IMR-90 (cell line): ENCODE measurements at regions of chr12 and their contacts with region 1.

Region 1: GRCh38 chr12:131104463-131105350 is 151.0 kb downstream of the ADGRD1 start:
- DNase-seq: peak; percentile 16
- ATAC-seq: peak; percentile 96
- H3K4me3 ChIP-seq: no peak overlapping the region
- H3K27ac ChIP-seq: no peak overlapping the region
- H3K4me1 ChIP-seq: no peaks in the 10 kb centered on the region
- H3K27me3 ChIP-seq: no peaks in the 10 kb centered on the region
- CTCF ChIP-seq: peak; percentile 36
- POLR2A ChIP-seq: no peak
- RAD21 ChIP-seq: peak; percentile 33

Region 2: DNA sequence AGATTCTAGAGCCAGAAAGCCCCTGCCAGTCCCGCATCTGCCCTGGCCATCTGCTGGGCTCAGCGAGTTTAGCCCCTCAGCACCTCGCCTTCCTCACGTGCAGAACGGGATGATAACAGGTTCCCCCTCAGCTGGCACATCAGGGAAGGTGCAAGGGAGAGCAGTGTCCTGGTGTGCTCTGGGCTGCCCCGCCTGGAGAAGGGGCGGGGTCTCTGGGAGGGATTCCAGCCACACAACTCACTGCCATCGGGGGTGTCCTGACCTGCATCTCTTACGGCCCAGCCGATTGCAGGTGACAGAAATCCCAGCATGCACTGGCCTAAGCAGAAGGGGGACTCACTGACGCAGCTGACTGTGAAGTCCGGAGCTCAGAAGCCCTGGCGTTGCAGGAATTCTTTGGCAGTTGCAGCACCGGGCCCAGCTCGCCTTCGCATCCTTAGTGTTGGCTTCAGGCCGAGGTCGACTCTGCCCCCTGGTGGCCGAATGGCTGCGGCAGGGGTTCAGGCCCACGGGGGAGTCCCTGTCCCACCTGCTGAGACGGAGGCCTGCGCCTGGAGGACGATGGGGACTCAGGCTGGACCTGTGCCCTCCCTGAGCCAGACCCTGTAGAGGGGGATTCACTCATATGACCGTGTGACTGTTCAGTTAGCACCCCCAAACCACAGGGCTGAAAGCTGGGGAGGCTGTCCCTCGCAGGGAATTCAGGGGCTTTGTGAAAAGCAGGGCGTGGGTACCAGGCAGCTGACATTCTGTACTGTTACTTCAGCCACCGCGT is 27.6 kb after region 1 on chr12:
- CTCF ChIA-PET with region 1: no interaction called
- POLR2A ChIA-PET with region 1: no interaction called
- dilution Hi-C with region 1: no loop called
- in situ Hi-C with region 1: no loop called
- intact Hi-C with region 1: loop called (anchors 1 kb)
- DNase-seq: peak; percentile 1
- ATAC-seq: peak; percentile 75
- H3K4me3 ChIP-seq: no peak overlapping the region
- H3K27ac ChIP-seq: no peak overlapping the region
- H3K4me1 ChIP-seq: no peaks in the 10 kb centered on the region
- H3K27me3 ChIP-seq: no peaks in the 10 kb centered on the region
- CTCF ChIP-seq: no peak
- POLR2A ChIP-seq: no peak
- RAD21 ChIP-seq: no peak

Region 3: DNA sequence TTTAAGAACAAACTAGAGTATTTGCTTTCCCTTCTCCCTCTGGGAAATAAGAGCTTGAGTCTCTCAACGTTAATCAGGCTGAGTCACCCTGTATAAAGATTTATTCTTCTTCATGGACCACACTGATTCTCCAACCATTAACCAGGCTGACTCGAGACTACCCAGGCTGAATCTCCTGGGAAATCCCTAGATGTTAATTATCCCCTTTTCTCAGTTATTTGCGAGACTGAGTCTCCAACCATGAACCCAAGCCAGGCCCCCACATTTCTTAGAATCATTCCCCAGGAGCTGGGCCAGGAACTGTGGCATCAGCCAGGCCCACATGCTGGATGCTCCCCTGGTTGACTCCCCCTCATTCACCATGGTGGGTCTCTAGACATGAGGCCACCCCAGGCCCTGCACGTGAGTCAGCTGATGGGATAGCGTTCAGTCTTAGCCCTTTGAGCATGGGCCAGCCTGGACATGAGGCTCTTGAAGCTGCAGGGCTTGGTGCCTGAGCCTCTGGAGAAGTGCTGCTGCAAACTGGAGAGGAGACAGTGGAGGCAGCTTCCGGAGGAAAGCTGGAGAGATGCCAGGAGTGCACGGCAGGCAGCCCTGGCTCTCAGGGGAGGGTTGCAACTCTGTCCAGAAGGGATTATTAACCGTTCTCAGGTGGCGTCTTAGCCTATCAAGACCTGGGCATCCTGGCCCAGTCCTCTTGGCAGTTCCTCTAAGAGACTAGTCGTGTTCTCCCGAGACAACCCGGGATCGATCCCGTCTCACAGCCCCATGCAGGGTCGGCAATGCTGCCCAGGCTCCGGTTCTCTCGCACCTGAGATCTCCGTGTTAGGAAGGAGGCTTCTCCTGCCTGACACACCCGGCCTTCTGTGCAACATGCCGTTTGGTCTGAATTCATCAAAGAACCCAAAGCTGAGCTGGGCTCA is 145.6 kb after region 1 on chr12:
- CTCF ChIA-PET with region 1: no interaction called
- POLR2A ChIA-PET with region 1: no interaction called
- dilution Hi-C with region 1: no loop called
- in situ Hi-C with region 1: no loop called
- intact Hi-C with region 1: no loop called
- DNase-seq: no peak
- ATAC-seq: no peak
- H3K4me3 ChIP-seq: no peak overlapping the region
- H3K27ac ChIP-seq: no peak overlapping the region
- H3K4me1 ChIP-seq: no peaks in the 10 kb centered on the region
- H3K27me3 ChIP-seq: no peaks in the 10 kb centered on the region
- CTCF ChIP-seq: no peak
- POLR2A ChIP-seq: no peak
- RAD21 ChIP-seq: no peak